Kidney (tissue), 22 donors: ENCODE measurements at regions of chr6 and their contacts with region 1.

Region 1: DNA sequence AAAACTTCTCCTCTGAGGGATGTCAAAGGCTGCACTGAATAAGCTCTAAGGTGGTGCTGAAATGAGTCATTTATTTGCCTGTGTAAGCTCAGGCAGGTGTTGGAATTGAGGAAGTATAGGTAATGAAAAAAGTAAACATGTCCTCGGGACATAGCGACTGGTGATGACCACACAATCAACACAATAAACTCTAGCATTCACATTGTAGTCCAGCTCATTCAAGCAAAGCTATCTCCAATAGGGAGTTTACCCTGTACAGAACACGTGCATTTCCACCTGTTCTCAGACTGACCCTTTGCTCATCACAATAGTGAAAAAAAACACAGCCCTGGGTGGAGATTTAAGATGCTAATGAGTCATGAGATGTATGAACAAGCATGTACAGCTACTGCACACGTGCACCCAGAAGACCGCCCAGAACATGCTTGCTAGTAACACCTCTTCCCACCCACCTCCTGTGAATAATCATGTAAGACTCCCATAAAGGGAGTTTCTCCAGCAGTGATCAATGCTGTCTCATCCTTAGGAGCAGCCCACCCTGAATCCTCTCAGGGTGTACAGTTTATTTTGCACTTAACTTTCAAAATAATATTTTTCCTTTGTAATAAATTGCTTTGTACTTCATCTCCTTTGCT is 33.0 kb upstream of the POU5F1 start:
- DNase-seq: peak in 2 of 5 donors; percentile 22 to 38
- H3K4me3 ChIP-seq: peak overlapping the region in 2 of 3 donors; percentile 69 to 92
- H3K27ac ChIP-seq: peak overlapping the region; percentile 43 to 82
- H3K4me1 ChIP-seq: peaks cover 0 to 14% (median 9%) of the 10 kb centered on the region in 3 donors
- H3K27me3 ChIP-seq: no peaks in the 10 kb centered on the region
- CTCF ChIP-seq: no peak

Region 2: GRCh38 chr6:31079656-31080261 is 123.7 kb before region 1 on chr6:
- intact Hi-C with region 1: no loop called
- DNase-seq: peak in 4 of 5 donors; percentile 76 to 86 (median 80)
- H3K4me3 ChIP-seq: no peak overlapping the region
- H3K27ac ChIP-seq: no peak overlapping the region
- H3K4me1 ChIP-seq: peaks cover 0 to 2% (median 0%) of the 10 kb centered on the region in 3 donors
- H3K27me3 ChIP-seq: no peaks in the 10 kb centered on the region
- CTCF ChIP-seq: peak; percentile 68

Region 3: DNA sequence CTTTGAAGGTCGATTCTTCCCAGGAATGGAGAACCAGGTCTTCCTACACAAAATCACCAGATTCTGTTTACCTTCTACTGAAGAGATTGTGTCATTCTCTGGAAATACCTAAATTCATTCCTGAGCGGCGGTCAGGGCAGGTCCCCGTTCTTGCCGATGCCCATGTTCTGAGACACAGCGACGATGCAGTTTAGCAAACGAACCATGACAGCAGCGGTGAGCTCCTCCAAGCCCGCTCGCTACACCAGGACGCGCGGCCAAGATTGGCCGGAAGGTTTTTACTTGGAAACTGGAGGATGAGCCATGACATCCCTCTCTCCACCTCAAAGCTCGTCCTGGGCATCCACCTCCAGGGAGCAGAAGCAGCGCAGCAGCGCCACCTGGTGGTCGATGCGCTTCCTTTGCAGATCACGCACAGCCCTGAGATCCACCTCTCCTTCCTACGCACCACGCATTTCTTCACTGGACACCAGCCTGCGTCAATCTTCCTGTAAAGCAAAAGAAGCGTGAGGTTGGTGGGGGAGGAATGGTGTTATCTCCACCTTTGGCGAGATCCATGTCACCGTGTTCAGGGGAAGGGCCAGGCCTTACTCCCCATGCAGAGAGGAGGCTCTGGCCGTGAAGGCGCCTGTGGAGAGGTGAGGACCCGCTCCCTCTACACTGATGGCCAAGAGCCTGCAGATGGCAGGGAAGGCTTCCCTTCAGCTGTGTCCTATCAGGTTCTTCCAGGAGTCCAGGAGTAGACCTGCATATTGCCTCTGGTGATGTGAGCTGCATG is 163.4 kb after region 1 on chr6:
- intact Hi-C with region 1: loop called (anchors 10 kb)
- DNase-seq: peak; percentile 86 to 95 (median 93)
- H3K4me3 ChIP-seq: peak overlapping the region; percentile 24 to 56 (median 46)
- H3K27ac ChIP-seq: no peak overlapping the region
- H3K4me1 ChIP-seq: peaks cover 0 to 5% (median 0%) of the 10 kb centered on the region in 3 donors
- H3K27me3 ChIP-seq: peaks cover 11% of the 10 kb centered on the region
- CTCF ChIP-seq: peak; percentile 91